Activated T-helper 1 cell treated with anti-CD3 and anti-CD28 coated beads, Interleukin-12 subunit alpha, Interleukin-12 subunit beta, Interleukin-2, Interleukin-4 antibody, amounts not matched to agents 30 ng/mL and 10 ng/mL and 1 ng/mL, durations not matched to agents 14 hours and 24 hours and 36 hours (primary cell): ENCODE measurements at regions of chr1 and their contacts with region 1.

Region 1: DNA sequence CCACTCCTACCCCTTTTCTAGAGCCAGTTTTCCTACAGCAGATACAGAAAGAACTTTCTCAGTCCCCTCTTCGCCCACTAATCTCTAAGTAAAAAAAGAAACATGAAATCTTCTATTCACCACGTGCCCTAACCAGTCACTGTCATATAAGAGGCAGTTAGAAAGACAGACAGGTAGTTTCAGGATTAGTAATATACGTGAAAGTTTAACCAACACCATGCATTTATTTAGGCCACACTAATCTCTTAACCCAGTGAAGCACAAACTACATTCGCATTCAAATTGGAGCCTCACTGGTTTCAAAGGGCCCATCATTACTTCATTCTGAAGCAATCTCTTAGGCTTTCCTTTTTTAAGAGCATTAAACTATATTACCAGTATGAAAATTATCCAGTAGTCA is 10.1 kb downstream of the GPATCH2 start:
- DNase-seq: no peak
- H3K4me3 Mint-ChIP-seq: no peak overlapping the region
- H3K27ac Mint-ChIP-seq: no peak overlapping the region
- H3K4me1 Mint-ChIP-seq: peaks cover 12% of the 10 kb centered on the region
- H3K27me3 Mint-ChIP-seq: no peaks in the 10 kb centered on the region

Region 2: GRCh38 chr1:217482356-217483102 is 138.3 kb before region 1 on chr1:
- intact Hi-C with region 1: loop called (anchors 1 kb)
- DNase-seq: peak; percentile 46
- H3K4me3 Mint-ChIP-seq: peak overlapping the region; percentile 37
- H3K27ac Mint-ChIP-seq: peak overlapping the region; percentile 77
- H3K4me1 Mint-ChIP-seq: peaks cover 33% of the 10 kb centered on the region
- H3K27me3 Mint-ChIP-seq: peaks cover 4% of the 10 kb centered on the region

Region 3: GRCh38 chr1:217703326-217703725 is 82.5 kb after region 1 on chr1:
- intact Hi-C with region 1: no loop called
- DNase-seq: no peak
- H3K4me3 Mint-ChIP-seq: no peak overlapping the region
- H3K27ac Mint-ChIP-seq: no peak overlapping the region
- H3K4me1 Mint-ChIP-seq: no peaks in the 10 kb centered on the region
- H3K27me3 Mint-ChIP-seq: no peaks in the 10 kb centered on the region